ENCODE measurements at regions of chr3 and their contacts with region 1.

Region 1: GRCh38 chr3:121948641-121949040 is 54.4 kb downstream of the SLC15A2 start:
- DNase-seq: no peak
- ATAC-seq: no peak
- H3K4me3 ChIP-seq: no peak overlapping the region
- H3K27ac ChIP-seq: no peak overlapping the region
- H3K4me1 ChIP-seq: no peaks in the 10 kb centered on the region
- H3K27me3 ChIP-seq: no peaks in the 10 kb centered on the region
- CTCF ChIP-seq: no peak
- POLR2A ChIP-seq: no peak
- RAD21 ChIP-seq: no peak

Region 2: DNA sequence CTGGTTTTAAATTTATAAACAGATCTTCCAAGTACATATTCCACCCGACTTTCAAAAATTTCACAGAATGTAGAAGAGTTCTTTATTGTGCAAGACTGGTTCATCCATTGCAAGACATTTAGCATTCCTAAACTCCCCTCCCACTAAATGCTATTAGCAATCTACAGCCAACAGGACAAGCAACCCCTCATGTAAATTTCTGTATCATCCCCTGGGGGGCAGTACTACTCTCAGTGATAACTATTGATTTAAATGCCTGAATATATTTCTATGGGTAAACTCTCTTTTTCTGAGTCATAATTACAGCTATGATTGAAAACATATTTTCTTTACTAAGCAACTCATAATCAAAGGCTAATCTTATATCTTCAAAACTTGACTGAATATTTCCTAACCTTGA is 65.1 kb before region 1 on chr3:
- CTCF ChIA-PET with region 1: no interaction called
- POLR2A ChIA-PET with region 1: no interaction called
- dilution Hi-C with region 1: no loop called
- in situ Hi-C with region 1: no loop called
- intact Hi-C with region 1: no loop called
- DNase-seq: peak; percentile 8
- ATAC-seq: peak; percentile 48; the same call in 1 of the 2 replicates
- H3K4me3 ChIP-seq: no peak overlapping the region
- H3K27ac ChIP-seq: no peak overlapping the region
- H3K4me1 ChIP-seq: no peaks in the 10 kb centered on the region
- H3K27me3 ChIP-seq: no peaks in the 10 kb centered on the region
- CTCF ChIP-seq: peak; percentile 33; the same call in 1 of the 2 replicates
- POLR2A ChIP-seq: no peak
- RAD21 ChIP-seq: peak; percentile 32; the same call in 1 of the 2 replicates

Region 3: GRCh38 chr3:121924734-121925133 is 23.9 kb before region 1 on chr3:
- CTCF ChIA-PET with region 1: interaction called, 10 read pairs
- POLR2A ChIA-PET with region 1: no interaction called
- dilution Hi-C with region 1: no loop called
- in situ Hi-C with region 1: no loop called
- intact Hi-C with region 1: no loop called
- DNase-seq: no peak
- ATAC-seq: no peak
- H3K4me3 ChIP-seq: no peak overlapping the region
- H3K27ac ChIP-seq: no peak overlapping the region
- H3K4me1 ChIP-seq: no peaks in the 10 kb centered on the region
- H3K27me3 ChIP-seq: no peaks in the 10 kb centered on the region
- CTCF ChIP-seq: no peak
- POLR2A ChIP-seq: no peak
- RAD21 ChIP-seq: no peak

Region 4: DNA sequence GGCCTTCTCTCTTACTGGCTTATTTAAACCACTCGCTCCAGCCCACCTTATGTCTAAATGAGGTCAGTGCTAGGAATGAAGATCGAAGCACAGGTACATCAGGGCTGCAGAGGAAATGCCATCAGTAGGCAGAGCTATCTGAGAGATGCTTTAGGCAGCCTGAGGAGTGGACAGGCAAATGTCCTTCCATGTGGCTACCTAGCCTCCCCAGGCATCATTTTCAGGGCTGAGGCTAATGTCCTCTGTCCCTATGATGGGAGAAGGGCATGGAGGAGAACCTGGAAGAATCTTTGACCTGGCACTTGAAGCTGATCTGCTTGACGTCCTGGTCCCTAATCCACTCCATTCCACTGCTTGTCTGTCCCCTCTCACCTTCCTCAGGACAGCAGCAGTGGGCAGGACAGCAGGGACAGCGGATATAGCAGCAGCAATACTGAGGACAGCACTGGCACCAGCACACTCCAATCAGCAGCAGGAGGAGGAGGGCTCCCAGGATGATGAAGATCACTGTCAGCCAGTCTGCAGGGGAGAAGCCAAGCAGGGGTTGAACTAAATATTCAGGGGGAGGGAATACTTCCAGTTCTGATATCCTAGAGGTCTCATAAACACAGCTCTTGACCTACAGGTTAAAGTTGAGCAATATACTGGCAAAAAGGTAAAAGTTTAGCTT is 52.4 kb after region 1 on chr3:
- CTCF ChIA-PET with region 1: no interaction called
- POLR2A ChIA-PET with region 1: no interaction called
- dilution Hi-C with region 1: no loop called
- in situ Hi-C with region 1: no loop called
- intact Hi-C with region 1: no loop called
- DNase-seq: no peak
- ATAC-seq: peak; percentile 71
- H3K4me3 ChIP-seq: no peak overlapping the region
- H3K27ac ChIP-seq: no peak overlapping the region
- H3K4me1 ChIP-seq: peaks cover 3% of the 10 kb centered on the region
- H3K27me3 ChIP-seq: no peaks in the 10 kb centered on the region; the same call in 1 of the 2 replicates
- CTCF ChIP-seq: no peak
- POLR2A ChIP-seq: no peak
- RAD21 ChIP-seq: no peak

Region 5: GRCh38 chr3:122033023-122033422 is 84.4 kb after region 1 on chr3:
- CTCF ChIA-PET with region 1: no interaction called
- POLR2A ChIA-PET with region 1: no interaction called
- dilution Hi-C with region 1: no loop called
- in situ Hi-C with region 1: no loop called
- intact Hi-C with region 1: no loop called
- DNase-seq: no peak
- ATAC-seq: no peak
- H3K4me3 ChIP-seq: no peak overlapping the region
- H3K27ac ChIP-seq: no peak overlapping the region
- H3K4me1 ChIP-seq: no peaks in the 10 kb centered on the region
- H3K27me3 ChIP-seq: no peaks in the 10 kb centered on the region
- CTCF ChIP-seq: no peak
- POLR2A ChIP-seq: no peak
- RAD21 ChIP-seq: no peak

Measured in IMR-90 (cell line).